ENCODE measurements at regions of chr2 and their contacts with region 1.

Region 1: DNA sequence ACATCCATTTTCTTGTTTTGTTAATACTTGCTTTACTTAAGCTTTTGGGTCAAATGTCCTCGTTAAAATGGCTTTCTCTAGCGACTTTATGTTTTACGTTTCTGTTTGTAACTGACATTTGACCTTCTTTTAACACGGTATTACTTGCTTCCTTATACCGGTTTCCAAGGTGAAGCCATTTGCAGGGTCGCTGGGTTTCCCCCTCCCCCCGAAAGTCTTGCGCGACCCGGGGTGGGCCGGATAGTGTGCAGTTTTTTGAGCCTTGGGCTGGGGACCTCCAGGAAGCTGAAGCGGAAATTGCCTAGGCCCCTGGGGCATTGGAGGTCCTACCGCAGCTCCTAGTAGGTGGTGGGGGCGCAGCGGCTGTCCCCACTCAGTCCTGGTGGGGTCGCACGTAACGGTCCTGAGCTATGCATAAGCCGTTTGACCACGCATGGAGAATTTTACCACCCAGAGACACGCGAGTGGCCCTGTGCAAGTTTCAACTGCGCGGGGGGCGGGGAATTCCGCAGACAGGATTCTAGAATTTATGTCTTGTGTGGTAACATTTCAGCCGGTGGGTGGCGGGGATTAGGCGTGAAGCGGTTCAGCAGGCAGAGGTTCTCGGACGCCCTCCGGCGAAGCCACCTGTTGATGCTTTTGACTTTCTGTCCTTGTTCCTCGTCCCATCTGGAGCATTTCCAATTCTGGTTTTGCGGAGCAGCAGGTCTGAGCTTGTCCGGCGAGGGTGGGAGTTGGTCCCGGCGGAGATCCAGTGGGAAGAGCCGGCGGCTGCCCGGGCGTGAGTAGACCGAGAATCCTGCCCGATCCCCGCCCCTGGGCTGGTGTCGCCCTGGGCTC is 2.4 kb downstream of the CFLAR start:
- DNase-seq: peak; percentile 95
- ATAC-seq: peak; percentile 29
- H3K4me3 Mint-ChIP-seq: peak overlapping the region; percentile 95
- H3K27ac Mint-ChIP-seq: peak overlapping the region; percentile 90
- H3K4me1 Mint-ChIP-seq: peaks cover 50% of the 10 kb centered on the region
- H3K27me3 Mint-ChIP-seq: peaks cover 2% of the 10 kb centered on the region

Region 2: GRCh38 chr2:200963124-200963917 is 155.0 kb before region 1 on chr2 and contains the start of gene ORC2:
- CTCF ChIA-PET with region 1: interaction called, 12 read pairs
- DNase-seq: peak; percentile 94
- ATAC-seq: peak; percentile 96
- H3K4me3 Mint-ChIP-seq: peak within 1 kb of the TSS; percentile 92
- H3K27ac Mint-ChIP-seq: peak within 1 kb of the TSS; percentile 96
- H3K4me1 Mint-ChIP-seq: peaks cover 65% of the 10 kb centered on the region
- H3K27me3 Mint-ChIP-seq: no peaks in the 10 kb centered on the region
- total RNA-seq, gene ORC2: 54.8 to 57.8 TPM

Region 3: GRCh38 chr2:201130524-201131186 is 12.3 kb after region 1 on chr2:
- CTCF ChIA-PET with region 1: interaction called, 62 read pairs
- DNase-seq: peak; percentile 70
- ATAC-seq: peak; percentile 58
- H3K4me3 Mint-ChIP-seq: peak overlapping the region; percentile 77
- H3K27ac Mint-ChIP-seq: peak overlapping the region; percentile 96
- H3K4me1 Mint-ChIP-seq: peaks cover 76% of the 10 kb centered on the region
- H3K27me3 Mint-ChIP-seq: no peaks in the 10 kb centered on the region

Region 4: GRCh38 chr2:201158111-201158929 is 40.0 kb after region 1 on chr2:
- CTCF ChIA-PET with region 1: interaction called, 49 read pairs
- DNase-seq: peak; percentile 74
- ATAC-seq: peak; percentile 84
- H3K4me3 Mint-ChIP-seq: no peak overlapping the region
- H3K27ac Mint-ChIP-seq: peak overlapping the region; percentile 84
- H3K4me1 Mint-ChIP-seq: peaks cover 14% of the 10 kb centered on the region
- H3K27me3 Mint-ChIP-seq: no peaks in the 10 kb centered on the region

Measured in activated CD8-positive, alpha-beta memory T cell treated with anti-CD3 and anti-CD28 coated beads, Interleukin-2, amount 10 ng/mL, durations not matched to agents 7 days and 5 days (primary cell).